Posterior vena cava (tissue), 2 donors: ENCODE measurements at regions of chr4 and their contacts with region 1.

Region 1: DNA sequence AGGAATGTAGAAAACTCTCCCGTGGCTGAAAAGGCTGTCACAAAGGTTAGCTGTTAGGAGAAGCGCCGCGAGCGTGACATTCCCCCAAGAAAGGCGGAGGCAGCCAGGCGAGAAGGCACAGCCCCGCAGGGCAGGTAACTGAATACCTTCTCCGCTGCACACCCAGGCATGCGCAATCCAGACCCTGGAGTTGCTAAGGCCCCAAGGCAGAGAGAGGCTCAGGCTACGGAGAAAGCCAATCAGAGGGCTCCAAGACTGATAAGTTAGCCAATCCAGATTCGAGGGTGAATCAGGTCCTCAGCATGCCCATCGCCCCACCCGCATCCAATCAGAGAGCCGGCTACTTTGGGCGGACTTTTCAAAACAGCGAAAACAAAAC is 485 bp upstream of the CCNG2 start:
- DNase-seq: peak; percentile 97

Region 2: DNA sequence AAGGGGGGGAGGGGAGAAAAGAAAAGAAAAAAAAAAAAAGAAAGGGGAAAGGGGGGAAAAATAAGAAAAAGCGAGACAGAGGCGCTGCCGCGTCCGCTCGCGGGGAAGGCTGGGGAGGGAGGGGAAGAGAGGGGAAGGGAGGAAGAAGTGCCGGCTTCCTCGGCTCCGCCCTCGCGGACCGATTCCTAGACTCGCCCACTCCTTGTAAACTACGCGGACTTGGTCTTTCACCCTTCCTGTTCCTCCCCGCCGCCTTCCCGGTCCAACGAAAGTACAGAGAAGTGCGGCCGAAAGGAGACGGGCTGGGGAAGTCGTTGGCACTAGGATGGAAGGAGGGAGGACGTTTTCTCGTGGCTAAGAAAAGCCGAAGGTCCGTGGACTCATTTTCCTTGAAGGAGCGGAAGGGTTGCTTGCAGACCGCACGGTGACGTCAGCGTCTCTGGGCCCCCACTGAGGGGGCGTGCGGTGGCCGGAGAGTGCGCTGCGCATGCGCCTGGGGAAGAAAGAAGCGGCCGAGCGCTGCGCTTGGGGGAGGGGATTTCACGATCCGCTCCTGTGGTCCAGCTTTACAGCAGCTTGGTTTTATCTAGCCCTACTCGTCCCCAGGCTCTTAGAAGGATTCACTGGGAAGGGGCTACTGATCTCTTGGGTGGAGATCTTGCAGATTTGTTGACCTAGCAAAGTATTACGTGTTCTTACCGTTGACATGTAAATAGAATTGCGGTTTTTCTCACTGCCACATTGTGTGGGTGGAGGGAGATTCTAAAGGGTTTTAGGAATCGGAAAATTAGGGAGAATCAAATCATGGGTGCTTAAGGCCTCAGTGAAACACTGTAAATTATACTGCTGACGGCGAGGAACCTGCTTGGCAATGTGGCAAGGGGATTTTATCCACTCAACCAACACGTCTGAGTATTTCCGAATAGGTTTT is 80.4 kb before region 1 on chr4 and contains the start of gene CCNI:
- intact Hi-C with region 1: loop called in 1 of 2 experiments (anchors 5 kb)
- DNase-seq: peak; percentile 99
- total RNA-seq, gene CCNI: 347 to 394 TPM

Region 3: GRCh38 chr4:77104791-77105540 is 51.6 kb before region 1 on chr4:
- intact Hi-C with region 1: loop called in 1 of 2 experiments (anchors 10 kb)
- DNase-seq: peak; percentile 90